GM12878 (cell line): ENCODE measurements at regions of chr7 and their contacts with region 1.

Region 1: DNA sequence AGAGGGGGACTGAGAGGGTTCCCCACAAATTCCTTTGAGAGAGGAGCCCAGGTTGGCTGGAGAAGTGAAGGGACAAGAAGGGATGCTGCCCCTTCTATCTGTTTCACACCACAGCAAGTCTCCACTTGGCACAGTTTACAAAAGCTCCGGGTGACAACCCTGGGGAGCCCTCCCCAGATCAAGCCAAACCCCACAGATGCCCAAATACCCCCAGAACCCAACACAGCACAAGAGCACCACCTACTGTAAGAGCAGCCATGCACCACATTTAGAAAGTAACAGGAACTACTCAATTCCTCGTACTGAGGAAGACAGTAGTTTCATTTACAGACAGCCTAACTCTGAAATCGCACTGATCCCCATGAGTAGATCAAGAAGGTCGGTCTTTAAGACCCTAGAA is 67.8 kb upstream of the ATP6V0A4 start:
- DNase-seq: peak; percentile 4
- ATAC-seq: peak; percentile 84
- H3K4me3 ChIP-seq: no peak overlapping the region
- H3K27ac ChIP-seq: no peak overlapping the region
- H3K4me1 ChIP-seq: no peaks in the 10 kb centered on the region
- H3K27me3 ChIP-seq: no peaks in the 10 kb centered on the region
- CTCF ChIP-seq: peak; percentile 44 to 62 (median 48); a peak in 5 of 6 replicates
- EP300 ChIP-seq: no peak
- POLR2A ChIP-seq: no peak
- RAD21 ChIP-seq: peak; percentile 75

Region 2: DNA sequence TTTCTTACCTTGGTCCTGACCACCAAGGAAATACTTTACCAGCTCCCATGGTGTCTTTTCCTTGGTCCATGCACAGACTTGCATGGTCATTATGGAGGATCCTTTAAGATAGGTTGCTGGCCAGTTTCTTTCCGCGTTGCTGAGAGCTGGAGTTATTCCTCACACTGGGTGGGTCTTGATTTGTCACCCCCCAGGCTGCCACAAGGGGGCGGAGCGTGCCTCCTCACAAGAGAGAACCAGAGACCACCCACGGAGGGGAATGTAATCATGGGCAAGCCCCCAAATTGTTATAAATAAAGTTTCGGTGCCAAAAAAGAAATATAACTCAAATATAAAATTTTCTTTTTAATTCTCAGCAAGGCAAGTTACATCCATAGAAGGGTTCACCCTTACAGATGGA is 416.3 kb before region 1 on chr7:
- CTCF ChIA-PET with region 1: no interaction called
- POLR2A ChIA-PET with region 1: no interaction called
- RAD21 ChIA-PET with region 1: no interaction called
- SMC1A ChIA-PET with region 1: no interaction called
- in situ Hi-C with region 1: no loop called
- intact Hi-C with region 1: loop called (anchors 5 kb)
- DNase-seq: no peak
- ATAC-seq: peak; percentile 54
- H3K4me3 ChIP-seq: no peak overlapping the region
- H3K27ac ChIP-seq: no peak overlapping the region
- H3K4me1 ChIP-seq: no peaks in the 10 kb centered on the region
- H3K27me3 ChIP-seq: no peaks in the 10 kb centered on the region
- CTCF ChIP-seq: peak; percentile 31 to 69 (median 55)
- EP300 ChIP-seq: no peak
- POLR2A ChIP-seq: no peak
- RAD21 ChIP-seq: peak; percentile 60

Region 3: GRCh38 chr7:138752568-138753518 is 113.0 kb before region 1 on chr7:
- CTCF ChIA-PET with region 1: no interaction called
- POLR2A ChIA-PET with region 1: no interaction called
- RAD21 ChIA-PET with region 1: no interaction called
- SMC1A ChIA-PET with region 1: no interaction called
- in situ Hi-C with region 1: no loop called
- intact Hi-C with region 1: loop called (anchors 5 kb)
- DNase-seq: peak; percentile 38
- ATAC-seq: peak; percentile 91
- H3K4me3 ChIP-seq: no peak overlapping the region
- H3K27ac ChIP-seq: no peak overlapping the region
- H3K4me1 ChIP-seq: no peaks in the 10 kb centered on the region
- H3K27me3 ChIP-seq: no peaks in the 10 kb centered on the region; a peak in 1 of 4 replicates
- CTCF ChIP-seq: no peak
- EP300 ChIP-seq: peak; percentile 46 to 51; a peak in 1 of 4 replicates
- POLR2A ChIP-seq: no peak
- RAD21 ChIP-seq: no peak

Region 4: DNA sequence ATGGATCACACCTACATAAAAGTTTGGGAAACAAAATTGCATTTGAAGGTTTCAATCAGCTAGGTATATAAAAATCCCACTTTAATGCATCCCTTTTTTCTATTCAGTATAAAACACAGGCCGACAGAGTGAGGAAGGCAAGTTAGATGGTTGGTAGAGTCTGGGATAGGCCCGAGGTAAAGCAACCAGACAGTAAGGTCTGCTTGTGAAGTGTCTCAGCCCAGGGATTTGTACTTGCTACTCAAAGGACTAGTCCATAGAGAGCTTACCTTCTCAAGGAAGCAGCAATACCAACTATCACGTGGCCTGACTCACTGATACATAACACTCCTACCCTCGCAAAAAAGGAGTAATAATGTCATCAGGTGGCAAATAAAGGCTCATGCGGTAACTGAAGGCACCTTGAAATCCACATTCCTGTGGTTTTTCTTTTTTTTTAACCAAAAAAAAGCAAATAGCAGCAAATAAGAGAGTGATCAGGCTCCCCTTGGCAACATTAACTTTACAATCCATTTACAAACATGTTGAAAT is 11.7 kb before region 1 on chr7:
- CTCF ChIA-PET with region 1: no interaction called
- POLR2A ChIA-PET with region 1: no interaction called
- RAD21 ChIA-PET with region 1: no interaction called
- SMC1A ChIA-PET with region 1: no interaction called
- in situ Hi-C with region 1: no loop called
- intact Hi-C with region 1: no loop called
- DNase-seq: no peak
- ATAC-seq: no peak
- H3K4me3 ChIP-seq: no peak overlapping the region
- H3K27ac ChIP-seq: no peak overlapping the region
- H3K4me1 ChIP-seq: no peaks in the 10 kb centered on the region
- H3K27me3 ChIP-seq: no peaks in the 10 kb centered on the region
- CTCF ChIP-seq: no peak
- EP300 ChIP-seq: no peak
- POLR2A ChIP-seq: no peak
- RAD21 ChIP-seq: no peak